ENCODE measurements at regions of chr5 and their contacts with region 1.

Region 1: GRCh38 chr5:58460732-58461286 is 923 bp upstream of the PLK2 start:
- DNase-seq: peak; percentile 86
- ATAC-seq: peak; percentile 65
- H3K4me3 Mint-ChIP-seq: peak overlapping the region; percentile 89
- H3K27ac Mint-ChIP-seq: peak overlapping the region; percentile 83
- H3K4me1 Mint-ChIP-seq: peaks cover 16% of the 10 kb centered on the region
- H3K27me3 Mint-ChIP-seq: no peaks in the 10 kb centered on the region
- CTCF ChIP-seq: no peak

Region 2: GRCh38 chr5:56909294-56910209 is 1551.3 kb before region 1 on chr5 and contains the start of gene SETD9:
- CTCF ChIA-PET with region 1: no interaction called
- POLR2A ChIA-PET with region 1: interaction called, 7 read pairs
- intact Hi-C with region 1: loop called (anchors 2 kb)
- DNase-seq: peak; percentile 93
- ATAC-seq: peak; percentile 85
- H3K4me3 Mint-ChIP-seq: peak within 1 kb of the TSS; percentile 96
- H3K27ac Mint-ChIP-seq: peak within 1 kb of the TSS; percentile 96
- H3K4me1 Mint-ChIP-seq: peaks cover 20% of the 10 kb centered on the region
- H3K27me3 Mint-ChIP-seq: no peaks in the 10 kb centered on the region
- CTCF ChIP-seq: no peak
- total RNA-seq, gene SETD9: 3.4 and 6.2 TPM in 2 replicates

Region 3: GRCh38 chr5:57499262-57500050 is 961.4 kb before region 1 on chr5:
- CTCF ChIA-PET with region 1: interaction called, 6 read pairs
- POLR2A ChIA-PET with region 1: no interaction called
- intact Hi-C with region 1: loop called (anchors 1 kb)
- DNase-seq: no peak
- ATAC-seq: no peak
- H3K4me3 Mint-ChIP-seq: peak overlapping the region; percentile 58
- H3K27ac Mint-ChIP-seq: no peak overlapping the region
- H3K4me1 Mint-ChIP-seq: peaks cover 4% of the 10 kb centered on the region
- H3K27me3 Mint-ChIP-seq: peaks cover 14% of the 10 kb centered on the region
- CTCF ChIP-seq: no peak

Region 4: DNA sequence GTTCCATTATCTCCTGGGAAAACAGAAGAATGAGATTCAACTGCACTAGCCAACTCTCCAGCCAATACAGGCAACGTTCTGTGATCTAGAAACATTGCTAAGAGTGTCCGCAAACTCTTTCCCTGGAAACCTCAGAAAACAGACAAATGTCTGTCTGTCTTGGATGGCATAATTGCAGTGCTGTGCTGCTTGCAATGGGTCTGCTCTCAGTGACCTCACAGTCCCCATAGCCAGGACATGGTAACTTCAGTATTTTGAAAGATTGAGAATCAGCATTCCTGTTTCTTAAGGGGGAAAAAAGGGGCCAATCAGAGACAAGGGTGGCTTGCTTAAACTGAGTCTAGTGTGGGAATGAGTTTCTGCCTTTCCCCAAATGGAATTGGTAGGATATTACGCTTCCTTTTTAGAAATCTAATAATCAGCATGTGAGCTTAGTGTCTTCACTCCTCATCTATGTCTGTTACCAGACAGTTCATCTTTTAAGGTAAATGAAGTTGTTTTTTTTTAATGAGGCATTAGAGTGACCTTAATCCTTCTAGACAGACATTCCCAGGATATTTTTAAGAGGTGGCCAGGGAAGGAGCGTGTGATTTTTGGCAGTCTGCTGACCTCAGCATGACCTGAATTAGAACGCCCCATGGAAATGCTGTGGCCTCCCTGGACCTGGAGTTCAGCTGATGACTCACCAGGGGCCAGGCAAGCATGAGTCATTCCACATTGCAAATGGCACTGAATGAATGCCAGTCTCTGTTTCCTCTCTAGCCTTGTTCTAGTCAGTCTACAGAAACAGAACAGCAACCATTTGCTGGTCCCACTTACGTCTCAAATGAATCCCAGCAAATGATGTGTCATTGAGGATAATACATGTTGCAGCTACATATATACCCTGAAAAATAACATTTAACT is 768.0 kb before region 1 on chr5:
- CTCF ChIA-PET with region 1: no interaction called
- POLR2A ChIA-PET with region 1: no interaction called
- intact Hi-C with region 1: no loop called
- DNase-seq: no peak
- ATAC-seq: no peak
- H3K4me3 Mint-ChIP-seq: no peak overlapping the region
- H3K27ac Mint-ChIP-seq: no peak overlapping the region
- H3K4me1 Mint-ChIP-seq: no peaks in the 10 kb centered on the region
- H3K27me3 Mint-ChIP-seq: peaks cover 2% of the 10 kb centered on the region
- CTCF ChIP-seq: no peak

Region 5: GRCh38 chr5:57887851-57888621 is 572.8 kb before region 1 on chr5:
- CTCF ChIA-PET with region 1: no interaction called
- POLR2A ChIA-PET with region 1: no interaction called
- intact Hi-C with region 1: loop called (anchors 2 kb)
- DNase-seq: no peak
- ATAC-seq: no peak
- H3K4me3 Mint-ChIP-seq: no peak overlapping the region
- H3K27ac Mint-ChIP-seq: no peak overlapping the region
- H3K4me1 Mint-ChIP-seq: no peaks in the 10 kb centered on the region
- H3K27me3 Mint-ChIP-seq: no peaks in the 10 kb centered on the region
- CTCF ChIP-seq: no peak

Region 6: GRCh38 chr5:58505971-58506640 is 45.3 kb after region 1 on chr5:
- CTCF ChIA-PET with region 1: interaction called, 4 read pairs
- POLR2A ChIA-PET with region 1: interaction called, 3 read pairs
- intact Hi-C with region 1: loop called (anchors 2 kb)
- DNase-seq: no peak
- ATAC-seq: peak; percentile 87
- H3K4me3 Mint-ChIP-seq: peak overlapping the region; percentile 62
- H3K27ac Mint-ChIP-seq: peak overlapping the region; percentile 78
- H3K4me1 Mint-ChIP-seq: peaks cover 80% of the 10 kb centered on the region
- H3K27me3 Mint-ChIP-seq: no peaks in the 10 kb centered on the region
- CTCF ChIP-seq: no peak

Region 7: DNA sequence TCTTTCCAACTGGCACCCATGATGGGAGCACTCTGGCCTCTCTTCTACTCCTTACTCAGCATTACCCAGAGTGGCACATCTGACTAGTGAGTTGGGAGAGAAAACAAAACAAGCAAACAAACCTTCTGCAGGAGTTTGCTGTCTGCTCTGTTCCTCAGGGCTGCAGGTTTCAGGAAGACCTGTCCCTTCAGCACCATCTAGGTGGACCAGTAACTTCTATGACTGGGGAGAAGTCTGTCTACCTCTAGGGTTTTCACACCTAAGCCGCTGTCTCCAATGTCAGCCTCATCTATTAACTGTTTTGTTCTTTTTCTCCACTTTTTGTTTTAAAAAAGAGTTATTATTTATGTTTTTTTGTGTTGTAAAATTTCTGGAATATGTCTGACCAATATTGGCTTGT is 180.7 kb after region 1 on chr5:
- CTCF ChIA-PET with region 1: no interaction called
- POLR2A ChIA-PET with region 1: no interaction called
- intact Hi-C with region 1: no loop called
- DNase-seq: no peak
- ATAC-seq: no peak
- H3K4me3 Mint-ChIP-seq: no peak overlapping the region
- H3K27ac Mint-ChIP-seq: no peak overlapping the region
- H3K4me1 Mint-ChIP-seq: no peaks in the 10 kb centered on the region
- H3K27me3 Mint-ChIP-seq: no peaks in the 10 kb centered on the region
- CTCF ChIP-seq: no peak

Region 8: GRCh38 chr5:59126708-59127573 is 666.1 kb after region 1 on chr5:
- CTCF ChIA-PET with region 1: no interaction called
- POLR2A ChIA-PET with region 1: no interaction called
- intact Hi-C with region 1: loop called (anchors 5 kb)
- DNase-seq: no peak
- ATAC-seq: no peak
- H3K4me3 Mint-ChIP-seq: no peak overlapping the region
- H3K27ac Mint-ChIP-seq: no peak overlapping the region
- H3K4me1 Mint-ChIP-seq: peaks cover 7% of the 10 kb centered on the region
- H3K27me3 Mint-ChIP-seq: no peaks in the 10 kb centered on the region
- CTCF ChIP-seq: no peak

Measured in activated B cell treated with CpG ODN at 0.5 μM for 24 hours (primary cell).